PC-9 (cell line): ENCODE measurements at regions of chr4 and their contacts with region 1.

Region 1: GRCh38 chr4:66662620-66663019 is 882.7 kb downstream of the CENPC start:
- DNase-seq: no peak
- H3K4me3 ChIP-seq: no peak overlapping the region
- H3K27ac ChIP-seq: no peak overlapping the region
- H3K4me1 ChIP-seq: no peaks in the 10 kb centered on the region
- H3K27me3 ChIP-seq: no peaks in the 10 kb centered on the region
- CTCF ChIP-seq: no peak

Region 2: GRCh38 chr4:66613591-66613990 is 49.0 kb before region 1 on chr4:
- CTCF ChIA-PET with region 1: no interaction called
- POLR2A ChIA-PET with region 1: no interaction called
- intact Hi-C with region 1: no loop called
- DNase-seq: no peak
- H3K4me3 ChIP-seq: no peak overlapping the region
- H3K27ac ChIP-seq: no peak overlapping the region
- H3K4me1 ChIP-seq: no peaks in the 10 kb centered on the region
- H3K27me3 ChIP-seq: no peaks in the 10 kb centered on the region
- CTCF ChIP-seq: no peak

Region 3: GRCh38 chr4:66688674-66689073 is 26.1 kb after region 1 on chr4:
- CTCF ChIA-PET with region 1: no interaction called
- POLR2A ChIA-PET with region 1: no interaction called
- intact Hi-C with region 1: loop called (anchors 2 kb)
- DNase-seq: no peak
- H3K4me3 ChIP-seq: no peak overlapping the region
- H3K27ac ChIP-seq: no peak overlapping the region
- H3K4me1 ChIP-seq: no peaks in the 10 kb centered on the region
- H3K27me3 ChIP-seq: no peaks in the 10 kb centered on the region
- CTCF ChIP-seq: no peak

Region 4: DNA sequence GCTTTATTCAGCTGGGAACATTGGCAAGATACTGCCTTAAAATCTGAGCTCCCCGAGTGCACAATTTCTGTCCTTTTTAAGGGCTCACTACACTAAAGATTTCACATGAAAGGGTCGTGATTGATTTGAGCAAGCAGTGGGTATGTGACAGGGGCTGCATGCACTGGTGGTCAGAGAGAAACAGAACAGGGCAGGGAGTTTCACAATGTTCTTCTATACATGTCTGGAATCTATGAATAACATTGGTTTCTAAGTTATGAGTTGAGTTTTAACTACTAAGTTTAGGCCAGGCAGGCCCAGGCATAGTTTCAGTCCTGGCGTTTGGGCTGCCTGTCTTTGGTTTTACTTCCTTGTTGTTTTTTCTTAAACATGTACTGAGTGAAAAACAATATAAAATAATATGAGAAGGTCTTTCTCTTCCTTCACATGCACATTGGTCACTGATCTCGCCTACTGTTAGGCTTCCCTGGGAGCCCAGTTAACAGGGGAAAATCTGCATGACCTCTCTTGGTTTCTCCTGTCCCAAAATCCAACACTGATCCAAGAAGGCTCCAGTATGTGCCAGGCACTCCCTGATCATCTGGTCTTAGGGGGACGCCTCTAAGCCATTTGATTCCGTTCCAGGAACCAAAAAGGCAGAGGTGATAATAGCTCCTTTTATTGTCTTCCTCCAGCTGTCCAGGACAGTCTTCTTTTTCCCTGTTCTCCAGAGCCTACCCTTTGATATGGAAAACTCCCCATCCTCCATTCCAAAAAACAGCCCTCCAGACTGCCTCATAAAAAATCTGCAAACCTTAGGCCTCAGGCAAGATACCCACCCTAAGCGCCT is 1913.9 kb after region 1 on chr4 and contains the start of gene UGT2B17:
- CTCF ChIA-PET with region 1: no interaction called
- POLR2A ChIA-PET with region 1: no interaction called
- intact Hi-C with region 1: no loop called
- DNase-seq: no peak
- H3K4me3 ChIP-seq: no peak within 1 kb of the TSS
- H3K27ac ChIP-seq: no peak within 1 kb of the TSS
- H3K4me1 ChIP-seq: no peaks in the 10 kb centered on the region
- H3K27me3 ChIP-seq: no peaks in the 10 kb centered on the region
- CTCF ChIP-seq: no peak
- total RNA-seq, gene UGT2B17: not detected in 2 replicates